ENCODE measurements at regions of chr4 and their contacts with region 1.

Region 1: DNA sequence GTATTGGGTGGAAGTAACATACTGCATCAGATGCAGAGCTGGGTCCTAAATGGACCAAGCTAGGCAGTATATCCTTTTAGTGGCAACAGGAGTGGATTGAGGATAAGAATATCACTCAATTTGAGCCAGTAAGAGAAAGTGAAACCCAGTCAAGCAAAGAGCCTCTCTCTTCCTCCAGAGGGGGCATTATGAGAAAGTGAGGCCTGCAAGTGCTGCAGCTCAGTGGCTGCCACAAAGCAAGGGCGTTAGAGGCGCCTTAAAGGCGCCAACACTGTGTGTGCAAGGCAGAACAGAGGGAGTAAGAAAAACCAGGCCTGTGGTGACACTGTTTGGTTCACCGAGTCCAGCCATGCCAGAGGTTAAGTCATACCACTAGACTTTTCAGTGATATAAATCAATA is 17.5 kb downstream of the STX18 start:
- DNase-seq: no peak
- H3K4me3 ChIP-seq: no peak overlapping the region
- H3K27ac ChIP-seq: no peak overlapping the region
- H3K27me3 ChIP-seq: no peaks in the 10 kb centered on the region
- CTCF ChIP-seq: peak; percentile 34; the same call in 1 of the 2 replicates

Region 2: DNA sequence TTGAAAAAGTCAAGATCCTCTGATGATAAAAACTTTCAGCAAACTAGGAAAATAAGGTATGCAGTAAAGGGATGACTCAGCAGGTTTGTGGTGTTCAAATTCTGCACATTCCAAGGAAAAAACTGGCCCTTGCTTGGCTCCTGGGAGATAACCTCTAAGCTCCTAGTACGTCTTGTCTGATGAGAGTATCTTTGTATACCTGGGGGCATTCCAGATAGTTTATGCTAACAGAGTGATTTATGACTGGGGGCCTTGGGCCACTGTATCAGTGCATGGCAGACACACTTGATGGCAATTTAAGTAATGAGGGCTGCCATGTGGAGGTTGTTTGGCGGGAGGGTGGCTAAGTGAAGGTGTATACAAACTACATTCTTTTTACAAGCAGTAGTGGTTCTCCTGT is 80.5 kb before region 1 on chr4:
- CTCF ChIA-PET with region 1: no interaction called
- POLR2A ChIA-PET with region 1: no interaction called
- DNase-seq: peak; percentile 21
- H3K4me3 ChIP-seq: no peak overlapping the region
- H3K27ac ChIP-seq: no peak overlapping the region
- H3K27me3 ChIP-seq: no peaks in the 10 kb centered on the region
- CTCF ChIP-seq: no peak

Region 3: GRCh38 chr4:4488405-4489404 is 35.7 kb before region 1 on chr4:
- CTCF ChIA-PET with region 1: interaction called, 47 read pairs
- POLR2A ChIA-PET with region 1: no interaction called
- DNase-seq: peak; percentile 56
- H3K4me3 ChIP-seq: no peak overlapping the region
- H3K27ac ChIP-seq: no peak overlapping the region
- H3K27me3 ChIP-seq: no peaks in the 10 kb centered on the region
- CTCF ChIP-seq: peak; percentile 97

Region 4: DNA sequence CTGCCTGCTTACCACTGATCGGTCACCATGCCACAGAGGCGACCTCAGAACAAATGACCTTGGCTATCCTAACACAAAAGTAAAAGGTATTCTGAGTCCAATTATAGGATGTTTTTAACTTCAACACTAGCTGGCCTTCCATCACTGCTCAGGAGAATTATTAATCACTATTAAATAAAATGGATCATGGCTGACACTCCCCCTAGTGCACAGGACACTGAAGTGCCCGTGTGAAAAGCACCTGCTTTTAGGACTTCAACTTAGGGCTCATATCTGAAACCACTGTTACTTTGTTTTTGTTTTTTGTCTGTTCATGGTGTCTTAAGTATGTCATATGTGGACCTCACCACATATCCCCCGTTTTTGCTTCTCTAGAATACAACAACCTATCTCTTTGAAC is 16.4 kb before region 1 on chr4:
- CTCF ChIA-PET with region 1: interaction called, 46 read pairs
- POLR2A ChIA-PET with region 1: no interaction called
- DNase-seq: no peak
- H3K4me3 ChIP-seq: no peak overlapping the region
- H3K27ac ChIP-seq: no peak overlapping the region
- H3K27me3 ChIP-seq: no peaks in the 10 kb centered on the region
- CTCF ChIP-seq: peak; percentile 58

Region 5: DNA sequence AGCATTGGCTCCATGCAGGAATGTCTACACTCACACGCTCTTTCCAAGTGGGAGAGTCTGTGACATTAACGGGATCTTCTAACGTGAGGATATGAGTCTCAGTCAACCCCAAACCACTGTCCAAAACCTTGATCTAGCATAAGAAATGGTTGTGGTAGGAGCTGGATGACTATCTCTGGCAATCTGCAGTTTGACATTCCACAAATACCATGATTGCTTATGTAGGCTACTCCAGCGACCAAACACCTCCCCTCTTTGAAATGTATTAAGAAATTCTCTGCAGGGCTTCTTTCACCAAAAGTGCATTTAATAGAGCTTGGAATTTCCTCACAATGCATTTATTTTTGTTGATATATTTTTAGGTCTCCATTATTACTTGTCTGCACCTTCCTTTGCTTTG is 31.6 kb after region 1 on chr4:
- CTCF ChIA-PET with region 1: interaction called, 16 read pairs
- POLR2A ChIA-PET with region 1: no interaction called
- DNase-seq: peak; percentile 55
- H3K4me3 ChIP-seq: no peak overlapping the region
- H3K27ac ChIP-seq: no peak overlapping the region
- H3K27me3 ChIP-seq: no peaks in the 10 kb centered on the region
- CTCF ChIP-seq: no peak

Region 6: DNA sequence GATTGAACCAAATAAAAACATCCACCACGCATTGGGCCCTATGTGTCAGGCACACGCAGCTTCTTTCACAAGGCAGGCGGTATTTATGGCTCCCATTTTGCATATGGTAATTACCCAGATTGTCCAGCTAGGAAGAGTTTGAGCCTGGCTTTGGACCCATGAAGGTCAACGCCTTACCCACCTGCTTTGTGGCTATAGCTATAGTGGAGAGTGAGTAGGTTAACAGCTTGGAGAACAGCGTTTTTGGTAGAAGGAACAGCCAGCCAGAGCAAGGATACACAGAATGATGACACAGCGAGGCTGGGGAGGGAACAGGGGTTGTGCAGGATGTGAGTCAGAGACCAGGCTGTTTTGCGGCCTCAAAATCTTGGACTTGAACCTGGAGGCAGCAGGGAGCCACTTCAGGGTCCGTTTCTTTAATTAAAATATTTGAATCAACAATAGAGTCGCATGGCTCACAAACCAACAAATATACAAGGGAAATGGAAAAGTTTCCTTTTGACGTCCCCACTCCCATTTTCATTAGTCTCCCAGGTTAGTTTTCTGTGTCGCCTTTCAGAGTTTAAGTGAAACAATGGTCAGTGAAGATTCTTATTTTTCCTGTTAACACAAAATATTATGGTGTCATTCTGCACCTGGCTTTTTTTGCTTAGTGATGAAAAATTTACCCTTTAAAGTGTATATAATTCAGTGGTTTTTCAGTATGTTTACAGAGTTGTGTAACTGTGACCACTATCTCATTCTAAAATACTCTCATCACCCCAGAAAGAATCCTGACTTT is 135.7 kb after region 1 on chr4:
- CTCF ChIA-PET with region 1: interaction called, 11 read pairs
- POLR2A ChIA-PET with region 1: no interaction called
- DNase-seq: peak; percentile 74
- H3K4me3 ChIP-seq: no peak overlapping the region
- H3K27ac ChIP-seq: peak overlapping the region; percentile 92
- H3K27me3 ChIP-seq: no peaks in the 10 kb centered on the region
- CTCF ChIP-seq: no peak

Region 7: GRCh38 chr4:4919927-4920326 is 395.6 kb after region 1 on chr4:
- CTCF ChIA-PET with region 1: no interaction called
- POLR2A ChIA-PET with region 1: no interaction called
- DNase-seq: no peak
- H3K4me3 ChIP-seq: no peak overlapping the region
- H3K27ac ChIP-seq: no peak overlapping the region
- H3K27me3 ChIP-seq: no peaks in the 10 kb centered on the region
- CTCF ChIP-seq: no peak

Measured in AG04450 (cell line).